Right cardiac atrium (tissue), 5 donors: ENCODE measurements at regions of chr6 and their contacts with region 1.

Region 1: DNA sequence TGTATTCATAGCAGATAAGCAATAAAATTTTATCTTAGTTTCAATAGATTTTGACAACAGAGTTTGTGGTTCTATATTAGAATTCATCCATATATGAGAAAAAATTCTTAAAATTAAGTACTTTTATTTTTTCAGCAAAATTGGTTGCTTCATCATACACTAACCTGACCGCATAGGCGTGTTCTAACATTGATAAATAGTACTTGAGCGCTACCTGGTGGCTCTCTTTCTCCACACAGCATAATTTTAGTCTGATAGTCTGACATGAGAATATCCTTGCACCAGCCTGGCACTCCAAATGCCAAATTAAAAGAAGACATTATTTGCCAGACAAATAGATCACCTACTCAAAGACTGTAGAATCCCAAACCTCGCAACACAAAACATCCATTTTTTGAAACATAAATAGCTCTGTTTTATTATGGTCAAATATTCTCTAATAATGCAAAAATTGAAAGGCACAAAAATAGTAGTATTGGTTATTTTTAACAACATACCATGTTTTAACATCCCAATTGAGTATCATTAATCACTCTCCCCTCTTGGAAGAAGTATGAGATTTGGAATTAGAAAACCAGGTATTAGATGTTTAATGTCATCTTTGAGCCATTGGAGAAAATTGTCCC is 33.0 kb upstream of the FILIP1 start:
- DNase-seq: peak in 2 of 3 donors; percentile 27 to 58
- ATAC-seq: peak; percentile 86 to 89
- H3K4me3 ChIP-seq: no peak overlapping the region
- H3K27ac ChIP-seq: no peak overlapping the region
- H3K4me1 ChIP-seq: no peaks in the 10 kb centered on the region
- H3K27me3 ChIP-seq: no peaks in the 10 kb centered on the region

Region 2: GRCh38 chr6:75266716-75267291 is 259.8 kb before region 1 on chr6:
- intact Hi-C with region 1: loop called (anchors 2 to 10 kb)
- DNase-seq: no peak
- ATAC-seq: peak; percentile 77 to 80
- H3K4me3 ChIP-seq: no peak overlapping the region
- H3K27ac ChIP-seq: no peak overlapping the region
- H3K4me1 ChIP-seq: peaks cover 2% of the 10 kb centered on the region
- H3K27me3 ChIP-seq: no peaks in the 10 kb centered on the region

Region 3: DNA sequence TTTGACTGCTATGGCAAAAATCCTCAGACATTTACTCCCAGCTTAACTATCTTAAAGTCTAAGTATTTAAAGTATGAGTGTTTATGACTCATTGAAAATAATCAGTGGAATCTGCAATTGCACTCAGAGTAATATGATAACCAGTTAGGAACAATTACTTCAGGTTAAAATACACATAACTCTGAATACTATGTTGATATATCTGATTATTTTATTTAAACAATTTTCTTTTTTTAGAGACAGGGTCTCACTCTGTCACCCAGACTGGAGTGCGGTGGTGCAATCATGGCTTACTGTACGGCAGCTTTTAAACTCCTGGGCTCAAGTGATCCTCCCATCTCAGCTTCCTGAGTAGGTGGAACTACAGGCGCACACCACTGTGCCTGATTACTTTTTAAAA is 76.9 kb before region 1 on chr6:
- intact Hi-C with region 1: no loop called
- DNase-seq: no peak
- ATAC-seq: no peak
- H3K4me3 ChIP-seq: no peak overlapping the region
- H3K27ac ChIP-seq: no peak overlapping the region
- H3K4me1 ChIP-seq: peaks cover 2% of the 10 kb centered on the region
- H3K27me3 ChIP-seq: no peaks in the 10 kb centered on the region

Region 4: GRCh38 chr6:75611702-75612375 is 85.2 kb after region 1 on chr6:
- intact Hi-C with region 1: no loop called
- DNase-seq: no peak
- ATAC-seq: peak in 1 of 2 donors; percentile 31
- H3K4me3 ChIP-seq: no peak overlapping the region
- H3K27ac ChIP-seq: no peak overlapping the region
- H3K4me1 ChIP-seq: peaks cover 8% of the 10 kb centered on the region
- H3K27me3 ChIP-seq: no peaks in the 10 kb centered on the region